Prostate gland (tissue), 2 donors: ENCODE measurements at regions of chr14 and their contacts with region 1.

Region 1: GRCh38 chr14:59055439-59056045 is 132.9 kb upstream of the DAAM1 start:
- DNase-seq: peak; percentile 16
- H3K4me3 ChIP-seq: no peak overlapping the region
- H3K27ac ChIP-seq: no peak overlapping the region
- H3K4me1 ChIP-seq: no peaks in the 10 kb centered on the region
- H3K27me3 ChIP-seq: no peaks in the 10 kb centered on the region
- CTCF ChIP-seq: peak; percentile 30 to 80 (median 62)
- POLR2A ChIP-seq: no peak

Region 2: GRCh38 chr14:58501214-58501816 is 554.2 kb before region 1 on chr14:
- intact Hi-C with region 1: loop called (anchors 5 kb)
- DNase-seq: no peak
- H3K4me3 ChIP-seq: no peak overlapping the region
- H3K27ac ChIP-seq: no peak overlapping the region
- H3K4me1 ChIP-seq: no peaks in the 10 kb centered on the region
- H3K27me3 ChIP-seq: no peaks in the 10 kb centered on the region
- CTCF ChIP-seq: peak; percentile 42 to 87 (median 72)
- POLR2A ChIP-seq: no peak

Region 3: GRCh38 chr14:59107819-59108428 is 52.4 kb after region 1 on chr14:
- intact Hi-C with region 1: no loop called
- DNase-seq: no peak
- H3K4me3 ChIP-seq: no peak overlapping the region
- H3K27ac ChIP-seq: no peak overlapping the region
- H3K4me1 ChIP-seq: no peaks in the 10 kb centered on the region
- H3K27me3 ChIP-seq: no peaks in the 10 kb centered on the region
- CTCF ChIP-seq: no peak
- POLR2A ChIP-seq: no peak